CD4-positive, alpha-beta T cell (primary cell): ENCODE measurements at regions of chr12 and their contacts with region 1.

Region 1: GRCh38 chr12:51217968-51218606 is at the start of gene POU6F1:
- DNase-seq: peak; percentile 53 to 90 (median 66)
- ATAC-seq: peak; percentile 83
- H3K4me3 ChIP-seq: peak within 1 kb of the TSS; percentile 98
- H3K4me3 Mint-ChIP-seq: peak within 1 kb of the TSS; percentile 94
- H3K27ac ChIP-seq: peak within 1 kb of the TSS; percentile 86 to 92
- H3K27ac Mint-ChIP-seq: peak within 1 kb of the TSS; percentile 98
- H3K4me1 ChIP-seq: peaks cover 16% of the 10 kb centered on the region
- H3K4me1 Mint-ChIP-seq: peaks cover 33% of the 10 kb centered on the region
- H3K27me3 ChIP-seq: no peaks in the 10 kb centered on the region
- H3K27me3 Mint-ChIP-seq: no peaks in the 10 kb centered on the region
- CTCF ChIP-seq: peak; percentile 60
- total RNA-seq, gene POU6F1: 31.7 to 36.8 TPM

Region 2: GRCh38 chr12:51083126-51083833 is 134.8 kb before region 1 on chr12 and contains the start of gene CSRNP2:
- CTCF ChIA-PET with region 1: no interaction called
- POLR2A ChIA-PET with region 1: interaction called, 22 read pairs
- intact Hi-C with region 1: loop called in 1 of 2 experiments (anchors 5 kb)
- DNase-seq: peak; percentile 92 to 97 (median 94)
- ATAC-seq: peak; percentile 99
- H3K4me3 ChIP-seq: peak within 1 kb of the TSS; percentile 84
- H3K4me3 Mint-ChIP-seq: peak within 1 kb of the TSS; percentile 95
- H3K27ac ChIP-seq: peak within 1 kb of the TSS; percentile 40 to 71
- H3K27ac Mint-ChIP-seq: peak within 1 kb of the TSS; percentile 87
- H3K4me1 ChIP-seq: peaks cover 20% of the 10 kb centered on the region
- H3K4me1 Mint-ChIP-seq: peaks cover 41% of the 10 kb centered on the region
- H3K27me3 ChIP-seq: no peaks in the 10 kb centered on the region
- H3K27me3 Mint-ChIP-seq: no peaks in the 10 kb centered on the region
- CTCF ChIP-seq: peak; percentile 34
- total RNA-seq, gene CSRNP2: 14.4 to 16.5 TPM

Region 3: DNA sequence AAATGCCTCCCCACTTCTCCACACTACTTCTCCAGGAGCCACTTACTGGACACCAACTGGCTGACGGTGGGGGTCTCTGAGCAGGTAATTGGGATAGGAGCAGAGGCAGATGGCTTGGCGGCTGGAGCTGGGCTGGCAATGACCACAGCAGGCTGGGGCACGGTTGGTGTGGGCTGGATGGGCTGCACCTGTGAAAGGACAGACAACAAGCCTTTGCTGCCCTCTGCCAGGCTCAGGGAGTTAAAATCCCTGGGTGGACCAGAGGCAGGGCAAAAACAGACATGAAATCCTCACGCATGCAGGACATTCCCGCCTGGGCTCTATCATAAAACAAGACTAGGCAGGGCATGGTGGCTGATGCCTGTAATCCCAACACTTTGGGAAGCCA is 25.8 kb before region 1 on chr12:
- CTCF ChIA-PET with region 1: no interaction called
- POLR2A ChIA-PET with region 1: no interaction called
- intact Hi-C with region 1: no loop called
- DNase-seq: no peak
- ATAC-seq: no peak
- H3K4me3 ChIP-seq: no peak overlapping the region
- H3K4me3 Mint-ChIP-seq: no peak overlapping the region
- H3K27ac ChIP-seq: no peak overlapping the region
- H3K27ac Mint-ChIP-seq: no peak overlapping the region
- H3K4me1 ChIP-seq: no peaks in the 10 kb centered on the region
- H3K4me1 Mint-ChIP-seq: no peaks in the 10 kb centered on the region
- H3K27me3 ChIP-seq: no peaks in the 10 kb centered on the region
- H3K27me3 Mint-ChIP-seq: no peaks in the 10 kb centered on the region
- CTCF ChIP-seq: no peak

Region 4: DNA sequence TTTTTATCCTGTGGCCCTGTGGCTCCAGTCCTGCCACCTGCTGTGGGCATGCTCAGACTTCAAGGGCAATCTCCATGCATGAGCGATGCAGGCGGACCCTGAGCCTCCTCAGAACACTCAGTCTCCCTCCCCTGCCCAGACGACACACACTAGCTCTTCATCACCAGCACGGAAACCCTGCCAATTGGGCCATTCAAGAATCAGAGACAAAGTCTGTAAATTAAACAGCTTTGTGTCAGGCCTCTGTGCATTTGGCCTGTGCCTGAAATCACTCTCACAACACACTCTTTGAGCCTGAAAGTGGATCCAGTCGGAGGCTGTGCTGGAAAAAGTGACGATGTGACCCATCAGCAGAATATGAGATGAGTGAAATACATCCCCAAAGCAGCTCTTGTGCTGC is 12.7 kb before region 1 on chr12:
- CTCF ChIA-PET with region 1: interaction called, 3 read pairs
- POLR2A ChIA-PET with region 1: interaction called, 20 read pairs
- intact Hi-C with region 1: no loop called
- DNase-seq: no peak
- ATAC-seq: no peak
- H3K4me3 ChIP-seq: no peak overlapping the region
- H3K4me3 Mint-ChIP-seq: no peak overlapping the region
- H3K27ac ChIP-seq: no peak overlapping the region
- H3K27ac Mint-ChIP-seq: no peak overlapping the region
- H3K4me1 ChIP-seq: peaks cover 14% of the 10 kb centered on the region
- H3K4me1 Mint-ChIP-seq: peaks cover 27% of the 10 kb centered on the region
- H3K27me3 ChIP-seq: no peaks in the 10 kb centered on the region
- H3K27me3 Mint-ChIP-seq: no peaks in the 10 kb centered on the region
- CTCF ChIP-seq: no peak

Region 5: DNA sequence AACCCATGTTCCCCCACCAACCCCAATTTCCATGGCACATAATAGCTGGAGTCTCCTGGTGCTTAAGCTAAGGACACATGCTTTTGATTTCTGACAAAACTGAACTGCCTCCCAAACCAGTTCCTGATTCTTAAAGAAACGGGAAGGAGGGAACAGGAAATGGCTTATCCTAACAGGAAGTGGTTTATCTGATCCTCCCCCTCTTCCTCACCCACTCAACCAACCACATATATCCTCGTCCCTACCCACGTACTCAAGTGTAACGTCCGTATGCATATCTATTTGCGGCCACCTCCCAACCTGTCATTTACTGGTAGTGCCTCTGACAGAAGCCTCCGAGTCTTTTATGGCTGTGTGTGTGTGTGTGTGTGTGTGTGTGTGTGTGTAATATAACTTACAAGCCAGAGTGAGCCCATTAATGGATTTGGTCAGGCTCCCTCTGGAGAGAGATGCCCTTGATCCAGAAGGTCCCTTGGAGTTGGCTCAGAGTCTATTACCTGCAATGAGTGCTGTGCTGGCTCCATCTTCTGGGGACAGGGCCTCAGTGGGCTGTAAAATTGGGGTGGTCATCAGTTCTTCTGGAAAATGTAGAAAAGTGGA is 28.3 kb after region 1 on chr12:
- CTCF ChIA-PET with region 1: interaction called, 5 read pairs
- POLR2A ChIA-PET with region 1: interaction called, 221 read pairs
- intact Hi-C with region 1: no loop called
- DNase-seq: peak in 8 of 14 experiments; percentile 7 to 72 (median 44)
- ATAC-seq: peak; percentile 78
- H3K4me3 ChIP-seq: no peak overlapping the region
- H3K4me3 Mint-ChIP-seq: peak overlapping the region; percentile 4
- H3K27ac ChIP-seq: peak overlapping the region; percentile 55 to 74
- H3K27ac Mint-ChIP-seq: peak overlapping the region; percentile 84
- H3K4me1 ChIP-seq: peaks cover 53% of the 10 kb centered on the region
- H3K4me1 Mint-ChIP-seq: peaks cover 67% of the 10 kb centered on the region
- H3K27me3 ChIP-seq: no peaks in the 10 kb centered on the region
- H3K27me3 Mint-ChIP-seq: no peaks in the 10 kb centered on the region
- CTCF ChIP-seq: no peak

Region 6: DNA sequence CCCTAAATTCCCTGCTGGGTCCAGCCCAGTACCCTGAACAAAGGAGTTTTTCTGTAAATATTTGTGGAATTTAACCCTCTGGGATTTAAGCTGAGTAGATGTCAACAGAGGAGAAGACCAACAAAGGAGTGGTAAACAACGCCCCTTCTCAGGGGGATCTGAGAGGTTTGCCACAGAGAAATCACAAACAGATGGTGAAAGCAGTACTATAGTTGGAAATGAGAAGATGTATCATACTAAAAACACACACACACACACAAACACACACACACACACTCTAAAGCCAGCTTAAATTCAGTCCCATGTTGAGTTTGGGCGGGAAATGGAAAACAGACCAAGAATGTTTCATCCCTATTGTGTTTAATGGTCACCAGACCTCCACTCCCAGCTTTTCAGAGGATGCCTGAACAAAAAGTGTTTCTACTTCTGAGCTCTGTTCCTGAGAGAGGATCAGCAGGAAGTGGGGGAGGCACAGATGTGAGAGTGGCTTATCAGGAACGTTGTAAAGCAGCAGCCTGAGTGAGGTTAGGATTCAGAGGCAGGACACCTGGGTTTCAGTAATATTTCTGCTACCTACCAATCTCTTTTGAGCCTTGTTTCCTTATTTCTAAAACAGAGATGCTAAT is 102.7 kb after region 1 on chr12:
- CTCF ChIA-PET with region 1: interaction called, 3 read pairs
- POLR2A ChIA-PET with region 1: interaction called, 19 read pairs
- intact Hi-C with region 1: no loop called
- DNase-seq: peak in 3 of 14 experiments; percentile 39 to 62 (median 41)
- ATAC-seq: no peak
- H3K4me3 ChIP-seq: peak overlapping the region; percentile 82
- H3K4me3 Mint-ChIP-seq: peak overlapping the region; percentile 97
- H3K27ac ChIP-seq: peak overlapping the region; percentile 72 to 91
- H3K27ac Mint-ChIP-seq: peak overlapping the region; percentile 87
- H3K4me1 ChIP-seq: peaks cover 81% of the 10 kb centered on the region
- H3K4me1 Mint-ChIP-seq: peaks cover 86% of the 10 kb centered on the region
- H3K27me3 ChIP-seq: no peaks in the 10 kb centered on the region
- H3K27me3 Mint-ChIP-seq: no peaks in the 10 kb centered on the region
- CTCF ChIP-seq: no peak

Region 7: DNA sequence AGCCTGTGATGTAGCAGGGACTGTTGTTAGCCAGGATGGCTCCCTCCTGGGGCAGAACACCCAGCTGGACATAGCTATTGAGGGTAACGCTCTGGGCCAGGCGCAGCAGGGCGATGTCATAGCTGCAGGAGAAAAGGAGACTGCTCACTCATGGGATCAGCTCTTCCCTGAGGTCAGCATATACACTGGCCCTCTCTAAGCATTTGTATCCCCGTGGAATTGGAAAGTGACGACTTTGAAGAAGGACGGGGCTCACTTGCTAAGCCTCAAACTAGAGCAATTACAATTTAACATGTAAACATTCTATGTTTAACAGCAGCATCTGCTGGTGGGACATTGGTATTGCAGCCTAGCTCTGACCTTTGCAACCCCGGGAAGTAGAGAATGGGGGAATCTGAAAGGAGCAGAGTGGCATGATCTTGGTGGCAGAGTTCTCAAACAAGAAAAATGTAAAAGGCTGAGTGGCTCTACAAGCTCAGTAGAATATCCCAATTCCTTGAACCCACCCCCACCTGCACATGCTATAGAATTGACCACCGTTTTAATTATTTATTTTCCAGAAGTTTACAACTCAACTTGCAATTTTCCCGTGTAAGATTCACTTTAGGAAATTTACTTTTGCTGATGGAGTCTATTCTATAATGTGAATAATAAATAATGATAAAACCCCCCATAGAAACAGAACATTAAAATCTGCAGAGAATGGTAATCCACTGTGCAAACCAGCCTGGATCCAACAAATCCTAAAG is 123.3 kb after region 1 on chr12:
- CTCF ChIA-PET with region 1: interaction called, 6 read pairs
- POLR2A ChIA-PET with region 1: interaction called, 12 read pairs
- intact Hi-C with region 1: no loop called
- DNase-seq: peak; percentile 57 to 86 (median 65)
- ATAC-seq: peak; percentile 98
- H3K4me3 ChIP-seq: no peak overlapping the region
- H3K4me3 Mint-ChIP-seq: peak overlapping the region; percentile 42
- H3K27ac ChIP-seq: no peak overlapping the region
- H3K27ac Mint-ChIP-seq: peak overlapping the region; percentile 51
- H3K4me1 ChIP-seq: peaks cover 17% of the 10 kb centered on the region
- H3K4me1 Mint-ChIP-seq: peaks cover 11% of the 10 kb centered on the region
- H3K27me3 ChIP-seq: no peaks in the 10 kb centered on the region
- H3K27me3 Mint-ChIP-seq: no peaks in the 10 kb centered on the region
- CTCF ChIP-seq: peak; percentile 97